A673 (cell line): ENCODE measurements at regions of chr2 and their contacts with region 1.

Region 1: DNA sequence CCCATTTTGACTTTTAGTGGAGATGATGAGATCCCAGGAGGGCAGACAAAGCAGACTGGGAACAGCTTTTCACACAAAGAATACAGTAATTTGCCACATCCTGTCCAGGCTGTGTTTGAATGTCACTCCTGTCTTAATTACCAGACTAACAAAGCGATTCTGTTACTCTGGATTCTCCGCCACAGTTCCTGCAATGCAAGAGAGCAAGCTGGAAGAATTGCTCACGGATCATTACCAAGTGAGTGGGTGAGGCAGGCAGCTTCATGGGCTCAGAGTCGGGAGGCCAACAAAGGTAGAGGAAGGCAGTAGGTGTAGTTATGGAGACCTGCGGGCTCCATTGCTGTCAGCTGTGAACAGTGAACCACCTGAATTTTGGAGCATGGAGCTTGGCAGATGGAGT is 250.5 kb upstream of the ATP5MC3 start:
- DNase-seq: peak; percentile 94
- H3K4me3 ChIP-seq: peak overlapping the region; percentile 10
- H3K27ac ChIP-seq: peak overlapping the region; percentile 74
- H3K4me1 ChIP-seq: peaks cover 41% of the 10 kb centered on the region
- H3K27me3 ChIP-seq: no peaks in the 10 kb centered on the region
- CTCF ChIP-seq: no peak

Region 2: DNA sequence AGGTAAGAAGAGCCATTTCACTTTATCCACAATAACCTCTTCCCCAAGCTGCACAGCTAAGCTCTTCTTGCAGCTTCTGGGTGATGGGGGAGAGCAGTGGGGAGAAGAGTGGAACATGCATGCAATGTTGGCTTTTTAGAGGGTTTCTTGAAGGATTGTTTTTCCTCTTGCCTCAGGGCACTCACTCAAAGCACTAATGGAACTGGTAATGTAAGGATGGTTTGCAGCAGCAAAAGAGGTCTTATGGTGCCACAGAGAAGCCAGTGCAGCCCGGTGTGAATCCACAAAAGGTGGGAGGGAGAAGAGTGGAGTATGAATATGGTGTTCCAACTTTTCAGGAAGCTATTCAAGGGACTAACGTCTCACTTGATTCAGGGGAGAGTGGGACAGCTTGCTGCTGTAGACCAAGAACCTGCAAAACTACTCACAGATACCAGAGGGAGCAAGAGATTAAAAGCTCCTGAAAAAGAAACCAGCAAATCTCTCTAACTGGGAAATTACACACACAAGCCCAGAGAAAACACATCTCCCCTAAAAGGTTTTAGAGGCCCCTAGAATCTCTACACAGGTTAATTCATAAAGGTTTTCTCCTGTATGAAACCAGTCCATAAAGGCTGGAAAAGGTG is 543.3 kb before region 1 on chr2:
- CTCF ChIA-PET with region 1: no interaction called
- POLR2A ChIA-PET with region 1: no interaction called
- intact Hi-C with region 1: no loop called
- DNase-seq: no peak
- H3K4me3 ChIP-seq: no peak overlapping the region
- H3K27ac ChIP-seq: no peak overlapping the region
- H3K4me1 ChIP-seq: no peaks in the 10 kb centered on the region
- H3K27me3 ChIP-seq: no peaks in the 10 kb centered on the region
- CTCF ChIP-seq: no peak

Region 3: DNA sequence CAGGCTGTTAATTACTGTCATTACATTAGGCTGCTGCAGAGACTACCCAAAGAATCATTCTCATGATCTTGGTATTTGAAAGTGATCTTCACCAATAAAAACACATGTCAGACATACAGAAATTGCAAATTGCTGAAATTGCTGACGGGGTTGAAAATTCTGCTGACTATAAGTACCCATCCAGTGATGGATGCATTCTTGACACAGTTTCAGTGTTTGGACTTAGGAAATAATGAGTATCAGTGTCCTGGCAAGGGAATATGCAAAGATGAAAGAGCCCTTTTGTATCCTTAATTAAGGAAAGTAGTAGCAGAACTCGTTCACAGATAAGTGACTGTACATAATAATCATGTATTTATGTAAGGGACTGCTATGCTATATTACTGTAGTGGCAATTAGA is 29.4 kb before region 1 on chr2:
- CTCF ChIA-PET with region 1: interaction called, 6 read pairs
- POLR2A ChIA-PET with region 1: interaction called, 3 read pairs
- intact Hi-C with region 1: loop called (anchors 2 kb)
- DNase-seq: peak; percentile 81
- H3K4me3 ChIP-seq: no peak overlapping the region
- H3K27ac ChIP-seq: peak overlapping the region; percentile 96
- H3K4me1 ChIP-seq: peaks cover 41% of the 10 kb centered on the region
- H3K27me3 ChIP-seq: no peaks in the 10 kb centered on the region
- CTCF ChIP-seq: no peak

Region 4: DNA sequence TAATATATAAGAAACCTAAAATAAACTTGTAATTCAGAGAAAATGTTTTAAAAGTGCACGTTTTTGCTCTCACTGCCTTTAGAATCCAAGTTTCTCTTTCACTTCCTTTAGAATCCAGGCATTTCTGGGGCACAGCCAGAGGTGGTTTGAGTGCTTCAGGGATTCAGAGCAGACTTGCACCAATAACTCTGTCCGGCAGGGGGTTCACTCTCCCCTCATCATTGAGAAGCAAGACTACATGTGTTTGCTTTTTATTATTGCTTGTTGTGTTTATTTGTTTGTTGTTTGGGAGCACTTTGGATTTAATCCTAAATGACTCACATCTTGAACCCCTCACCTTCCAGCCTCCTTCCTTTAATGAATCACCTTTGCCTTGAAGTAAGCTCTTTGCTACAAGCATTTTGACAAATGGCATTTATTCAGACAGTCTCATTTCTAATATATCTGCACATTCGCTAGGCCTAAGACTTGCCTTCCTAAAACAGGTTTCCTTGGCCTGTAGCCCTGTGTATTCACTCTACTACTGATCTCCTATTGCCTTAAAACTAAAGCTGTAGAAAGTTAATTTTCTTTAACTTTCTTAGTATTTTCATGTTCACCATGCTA is 17.0 kb before region 1 on chr2:
- CTCF ChIA-PET with region 1: interaction called, 10 read pairs
- POLR2A ChIA-PET with region 1: no interaction called
- intact Hi-C with region 1: no loop called
- DNase-seq: peak; percentile 79
- H3K4me3 ChIP-seq: no peak overlapping the region
- H3K27ac ChIP-seq: no peak overlapping the region
- H3K4me1 ChIP-seq: peaks cover 12% of the 10 kb centered on the region
- H3K27me3 ChIP-seq: no peaks in the 10 kb centered on the region
- CTCF ChIP-seq: peak; percentile 67

Region 5: GRCh38 chr2:175648577-175649063 is 216.6 kb after region 1 on chr2:
- CTCF ChIA-PET with region 1: no interaction called
- POLR2A ChIA-PET with region 1: no interaction called
- intact Hi-C with region 1: no loop called
- DNase-seq: no peak
- H3K4me3 ChIP-seq: no peak overlapping the region
- H3K27ac ChIP-seq: no peak overlapping the region
- H3K4me1 ChIP-seq: no peaks in the 10 kb centered on the region
- H3K27me3 ChIP-seq: no peaks in the 10 kb centered on the region
- CTCF ChIP-seq: no peak